H1 (cell line): ENCODE measurements at regions of chr11 and their contacts with region 1.

Region 1: GRCh38 chr11:123407130-123407995 is 22.7 kb upstream of the GRAMD1B start:
- DNase-seq: peak; percentile 56 to 75
- H3K4me3 ChIP-seq: no peak overlapping the region; a peak in 1 of 8 replicates
- H3K27ac ChIP-seq: no peak overlapping the region
- H3K4me1 ChIP-seq: peaks cover 0 to 21% (median 7%) of the 10 kb centered on the region in 4 experiments; a peak in 6 of 7 replicates
- H3K27me3 ChIP-seq: peaks cover 0 to 6% (median under 1%) of the 10 kb centered on the region in 4 experiments; a peak in 4 of 7 replicates
- CTCF ChIP-seq: peak; percentile 59 to 94 (median 86)
- EP300 ChIP-seq: 0 out of 3 replicates have a peak, but pooled peaks of 1 of the 2 experiments have one; percentile 3
- POLR2A ChIP-seq: no peak
- RAD21 ChIP-seq: peak; percentile 84 to 94

Region 2: GRCh38 chr11:123221096-123221561 is 186.2 kb before region 1 on chr11:
- CTCF ChIA-PET with region 1: no interaction called
- POLR2A ChIA-PET with region 1: no interaction called
- DNase-seq: no peak
- H3K4me3 ChIP-seq: no peak overlapping the region
- H3K27ac ChIP-seq: no peak overlapping the region
- H3K4me1 ChIP-seq: peaks cover 0 to 12% (median 6%) of the 10 kb centered on the region in 4 experiments; a peak in 4 of 7 replicates
- H3K27me3 ChIP-seq: peaks cover 0 to 1% (median 0%) of the 10 kb centered on the region in 4 experiments; a peak in 1 of 7 replicates
- CTCF ChIP-seq: no peak
- EP300 ChIP-seq: no peak
- POLR2A ChIP-seq: no peak
- RAD21 ChIP-seq: no peak

Region 3: DNA sequence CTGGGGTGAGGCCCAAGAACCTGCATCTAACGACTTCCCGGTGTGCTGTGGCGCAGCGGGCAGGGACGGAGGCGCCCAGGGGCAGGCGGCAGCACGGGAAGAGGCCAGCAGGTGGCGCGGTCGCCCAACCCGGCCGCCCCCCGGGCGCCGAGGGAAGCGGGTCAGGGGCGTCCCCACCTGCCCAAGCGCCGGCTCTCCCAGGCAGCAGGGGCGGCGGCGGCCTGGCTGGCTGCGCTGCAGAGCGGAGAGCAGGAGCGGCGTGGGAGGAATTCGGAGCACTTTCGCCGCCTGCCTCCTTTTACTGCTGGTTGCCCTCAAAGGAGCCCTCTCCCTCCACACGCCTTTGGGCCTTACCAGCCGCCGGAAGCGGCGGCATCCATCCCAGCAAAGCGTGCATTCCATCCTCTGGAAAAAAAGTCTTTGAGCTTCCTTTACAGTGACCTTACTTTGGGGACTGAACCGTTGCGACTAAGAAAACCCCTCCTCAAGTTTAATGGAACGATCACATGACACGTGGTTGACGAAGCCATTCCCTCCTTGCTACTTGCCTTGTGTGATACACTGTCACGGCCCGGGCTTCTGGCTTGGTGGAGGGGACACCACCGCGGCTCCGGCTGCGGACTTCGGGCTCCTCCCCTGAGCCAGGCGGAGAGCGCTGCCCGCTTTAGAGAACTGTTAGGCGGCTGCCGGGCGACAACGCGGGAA is 105.5 kb before region 1 on chr11:
- CTCF ChIA-PET with region 1: interaction called, 32 read pairs
- POLR2A ChIA-PET with region 1: no interaction called
- DNase-seq: peak; percentile 46 to 93
- H3K4me3 ChIP-seq: peak overlapping the region; percentile 42 to 80 (median 61)
- H3K27ac ChIP-seq: no peak overlapping the region
- H3K4me1 ChIP-seq: peaks cover 0 to 11% (median 6%) of the 10 kb centered on the region in 4 experiments; a peak in 6 of 7 replicates
- H3K27me3 ChIP-seq: peaks cover 2 to 22% (median 18%) of the 10 kb centered on the region in 4 experiments
- CTCF ChIP-seq: peak; percentile 81 to 95 (median 91)
- EP300 ChIP-seq: no peak
- POLR2A ChIP-seq: no peak
- RAD21 ChIP-seq: peak; percentile 83 to 92

Region 4: GRCh38 chr11:123308077-123308476 is 99.3 kb before region 1 on chr11:
- CTCF ChIA-PET with region 1: interaction called, 14 read pairs
- POLR2A ChIA-PET with region 1: no interaction called
- DNase-seq: no peak
- H3K4me3 ChIP-seq: no peak overlapping the region
- H3K27ac ChIP-seq: no peak overlapping the region
- H3K4me1 ChIP-seq: peaks cover 5 to 10% (median 7%) of the 10 kb centered on the region in 4 experiments; a peak in 6 of 7 replicates
- H3K27me3 ChIP-seq: peaks cover 0 to 9% (median 5%) of the 10 kb centered on the region in 4 experiments; a peak in 5 of 7 replicates
- CTCF ChIP-seq: no peak
- EP300 ChIP-seq: no peak
- POLR2A ChIP-seq: no peak
- RAD21 ChIP-seq: no peak

Region 5: DNA sequence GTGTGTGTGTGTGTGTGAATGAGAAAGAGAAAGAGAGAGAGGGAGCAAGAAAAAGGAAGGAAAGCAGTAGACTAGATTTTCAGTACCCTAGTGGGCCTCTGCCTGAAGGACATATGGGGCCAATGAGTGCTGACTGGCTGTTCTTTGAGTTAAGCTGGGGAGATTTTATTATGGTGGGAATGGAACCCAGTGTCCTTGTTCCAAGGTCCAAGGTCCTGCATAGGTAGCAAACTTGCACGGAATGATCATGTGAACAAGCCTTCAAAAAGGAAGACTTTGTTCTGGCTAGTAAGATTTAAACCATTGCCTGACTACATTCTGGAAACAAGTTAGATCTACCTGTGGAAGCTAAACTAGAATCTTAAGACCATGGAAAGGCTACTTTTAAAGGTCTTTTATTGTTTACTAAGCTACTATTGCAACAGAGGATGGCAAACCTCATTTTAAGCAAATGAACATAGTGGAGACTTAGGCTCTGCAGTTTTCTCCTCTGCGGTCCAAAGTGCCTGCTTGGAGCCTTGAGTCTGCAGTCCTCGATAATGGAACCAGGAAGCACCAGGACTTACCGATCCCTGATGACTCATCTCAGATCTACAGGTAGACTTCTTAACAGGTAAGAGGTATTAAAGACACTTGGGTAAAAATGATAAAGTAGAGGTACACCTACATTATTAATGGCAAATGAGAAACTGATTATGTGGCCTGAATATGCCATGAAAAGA is 12.5 kb after region 1 on chr11:
- CTCF ChIA-PET with region 1: interaction called, 57 read pairs
- POLR2A ChIA-PET with region 1: interaction called, 3 read pairs
- DNase-seq: no peak
- H3K4me3 ChIP-seq: no peak overlapping the region
- H3K27ac ChIP-seq: no peak overlapping the region
- H3K4me1 ChIP-seq: no peaks in the 10 kb centered on the region
- H3K27me3 ChIP-seq: no peaks in the 10 kb centered on the region; a peak in 1 of 7 replicates
- CTCF ChIP-seq: no peak
- EP300 ChIP-seq: no peak
- POLR2A ChIP-seq: no peak
- RAD21 ChIP-seq: no peak

Region 6: GRCh38 chr11:123429913-123430720 is 22.8 kb after region 1 on chr11 and contains the start of gene GRAMD1B:
- CTCF ChIA-PET with region 1: interaction called, 81 read pairs
- POLR2A ChIA-PET with region 1: interaction called, 5 read pairs
- DNase-seq: peak; percentile 54 to 87
- H3K4me3 ChIP-seq: peak within 1 kb of the TSS; percentile 68 to 88 (median 82)
- H3K27ac ChIP-seq: no peak within 1 kb of the TSS
- H3K4me1 ChIP-seq: peaks cover 12 to 18% (median 14%) of the 10 kb centered on the region in 4 experiments
- H3K27me3 ChIP-seq: peaks cover 0 to 17% (median under 1%) of the 10 kb centered on the region in 4 experiments; a peak in 4 of 7 replicates
- CTCF ChIP-seq: peak in 1 of 3 experiments; percentile 27; a peak in 1 of 4 replicates
- EP300 ChIP-seq: no peak
- POLR2A ChIP-seq: 0 out of 3 replicates have a peak, but pooled peaks of 1 of the 2 experiments have one; percentile 31
- RAD21 ChIP-seq: peak in 1 of 2 experiments; percentile 27; a peak in 3 of 4 replicates
- total RNA-seq, gene GRAMD1B: 21.2 and 22.4 TPM in 2 replicates

Region 7: GRCh38 chr11:123494195-123495050 is 87.1 kb after region 1 on chr11:
- CTCF ChIA-PET with region 1: interaction called, 14 read pairs
- POLR2A ChIA-PET with region 1: no interaction called
- DNase-seq: no peak
- H3K4me3 ChIP-seq: peak overlapping the region in 1 of 4 experiments; percentile 4; a peak in 2 of 8 replicates
- H3K27ac ChIP-seq: no peak overlapping the region
- H3K4me1 ChIP-seq: peaks cover 7 to 24% (median 16%) of the 10 kb centered on the region in 4 experiments
- H3K27me3 ChIP-seq: no peaks in the 10 kb centered on the region
- CTCF ChIP-seq: no peak
- EP300 ChIP-seq: 0 out of 3 replicates have a peak, but pooled peaks of 1 of the 2 experiments have one; percentile 41
- POLR2A ChIP-seq: no peak
- RAD21 ChIP-seq: no peak